ENCODE measurements at regions of chr19 and their contacts with region 1.

Region 1: GRCh38 chr19:16495982-16496612 is at the starts of genes C19orf44 and CALR3:
- DNase-seq: peak; percentile 97 to 100
- H3K4me3 ChIP-seq: peak within 1 kb of the TSS; percentile 72 to 82
- H3K27ac ChIP-seq: peak within 1 kb of the TSS; percentile 64 to 69
- H3K4me1 ChIP-seq: peaks cover 0 to 7% of the 10 kb centered on the region in 2 donors
- H3K27me3 ChIP-seq: no peaks in the 10 kb centered on the region
- CTCF ChIP-seq: peak in 1 of 3 experiments; percentile 22
- total RNA-seq, gene C19orf44: 5.1 TPM
- total RNA-seq, gene CALR3: not detected

Region 2: GRCh38 chr19:16472992-16473391 is 23.1 kb before region 1 on chr19:
- intact Hi-C with region 1: loop called (anchors 1 kb)
- DNase-seq: no peak
- H3K4me3 ChIP-seq: no peak overlapping the region
- H3K27ac ChIP-seq: no peak overlapping the region
- H3K4me1 ChIP-seq: peaks cover 3 to 12% of the 10 kb centered on the region in 2 donors
- H3K27me3 ChIP-seq: no peaks in the 10 kb centered on the region
- CTCF ChIP-seq: no peak

Region 3: DNA sequence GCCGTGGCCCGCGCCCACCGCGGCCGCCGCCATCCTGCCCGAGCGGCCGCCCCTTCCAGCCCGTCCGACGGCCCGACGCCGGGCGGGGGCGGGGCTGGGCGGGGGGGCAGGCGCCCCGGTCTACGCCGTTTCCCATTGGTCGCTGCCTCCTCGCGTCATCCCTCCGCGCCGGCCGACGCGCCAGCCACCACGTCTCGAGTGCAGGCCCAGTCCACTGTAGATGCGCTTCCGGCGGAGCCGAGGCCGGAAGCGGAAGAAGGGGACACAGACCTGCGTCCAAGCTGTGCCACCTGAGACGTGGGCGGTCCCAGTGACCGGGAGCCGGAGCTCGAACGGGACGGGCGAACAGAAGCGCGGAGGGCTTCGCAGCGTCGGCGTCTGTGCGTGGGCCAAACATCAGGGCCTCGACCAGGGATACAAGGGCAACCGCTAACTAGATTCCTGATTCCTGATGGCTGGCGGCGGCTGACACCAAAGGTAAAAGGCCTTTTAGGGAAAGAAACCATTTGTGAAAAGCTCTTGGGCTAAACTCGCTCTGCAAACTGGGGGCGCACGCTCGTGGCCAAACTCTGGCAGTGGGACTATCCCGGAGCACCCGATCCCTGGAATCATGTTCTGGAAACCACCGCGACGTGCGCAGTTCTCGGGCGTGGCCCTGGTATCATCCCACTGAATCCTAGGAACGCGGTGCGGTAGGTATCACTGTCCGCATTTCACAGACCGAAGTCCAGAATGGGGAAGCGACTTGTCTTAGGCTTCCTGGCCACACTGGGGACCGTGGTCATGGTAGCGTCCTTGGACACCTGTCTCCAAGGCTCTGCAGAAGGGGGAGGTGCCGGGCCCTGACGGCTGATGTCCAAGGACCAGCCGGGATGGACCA is 76.5 kb after region 1 on chr19 and contains the start of gene SLC35E1:
- intact Hi-C with region 1: loop called (anchors 1 kb)
- DNase-seq: peak; percentile 86 to 97
- H3K4me3 ChIP-seq: peak within 1 kb of the TSS; percentile 90 to 95
- H3K27ac ChIP-seq: peak within 1 kb of the TSS; percentile 73 to 86
- H3K4me1 ChIP-seq: peaks cover 14 to 23% of the 10 kb centered on the region in 2 donors
- H3K27me3 ChIP-seq: no peaks in the 10 kb centered on the region
- CTCF ChIP-seq: no peak
- total RNA-seq, gene SLC35E1: 56.3 TPM

Region 4: GRCh38 chr19:16659831-16660708 is 164.0 kb after region 1 on chr19 and contains the start of gene SMIM7:
- intact Hi-C with region 1: loop called (anchors 1 kb)
- DNase-seq: peak; percentile 93 to 99
- H3K4me3 ChIP-seq: peak within 1 kb of the TSS; percentile 81 to 93
- H3K27ac ChIP-seq: peak within 1 kb of the TSS; percentile 87
- H3K4me1 ChIP-seq: peaks cover 9 to 20% of the 10 kb centered on the region in 2 donors
- H3K27me3 ChIP-seq: no peaks in the 10 kb centered on the region
- CTCF ChIP-seq: no peak
- total RNA-seq, gene SMIM7: 16.7 TPM